ENCODE measurements at regions of chr3 and their contacts with region 1.

Region 1: GRCh38 chr3:25594007-25594502 is 70.7 kb downstream of the TOP2B start:
- DNase-seq: peak; percentile 43 to 52
- H3K4me3 ChIP-seq: no peak overlapping the region
- H3K27ac ChIP-seq: peak overlapping the region; percentile 7 to 39 (median 29)
- H3K4me1 ChIP-seq: peaks cover 47 to 49% of the 10 kb centered on the region in 2 donors
- H3K27me3 ChIP-seq: no peaks in the 10 kb centered on the region
- CTCF ChIP-seq: peak; percentile 83 to 99 (median 87)
- POLR2A ChIP-seq: no peak

Region 2: GRCh38 chr3:24773798-24774197 is 820.3 kb before region 1 on chr3:
- intact Hi-C with region 1: loop called (anchors 5 kb)
- DNase-seq: peak; percentile 57 to 62
- H3K4me3 ChIP-seq: no peak overlapping the region
- H3K27ac ChIP-seq: no peak overlapping the region
- H3K4me1 ChIP-seq: no peaks in the 10 kb centered on the region
- H3K27me3 ChIP-seq: no peaks in the 10 kb centered on the region
- CTCF ChIP-seq: peak in 5 of 6 experiments; percentile 34 to 91 (median 78)
- POLR2A ChIP-seq: no peak

Region 3: DNA sequence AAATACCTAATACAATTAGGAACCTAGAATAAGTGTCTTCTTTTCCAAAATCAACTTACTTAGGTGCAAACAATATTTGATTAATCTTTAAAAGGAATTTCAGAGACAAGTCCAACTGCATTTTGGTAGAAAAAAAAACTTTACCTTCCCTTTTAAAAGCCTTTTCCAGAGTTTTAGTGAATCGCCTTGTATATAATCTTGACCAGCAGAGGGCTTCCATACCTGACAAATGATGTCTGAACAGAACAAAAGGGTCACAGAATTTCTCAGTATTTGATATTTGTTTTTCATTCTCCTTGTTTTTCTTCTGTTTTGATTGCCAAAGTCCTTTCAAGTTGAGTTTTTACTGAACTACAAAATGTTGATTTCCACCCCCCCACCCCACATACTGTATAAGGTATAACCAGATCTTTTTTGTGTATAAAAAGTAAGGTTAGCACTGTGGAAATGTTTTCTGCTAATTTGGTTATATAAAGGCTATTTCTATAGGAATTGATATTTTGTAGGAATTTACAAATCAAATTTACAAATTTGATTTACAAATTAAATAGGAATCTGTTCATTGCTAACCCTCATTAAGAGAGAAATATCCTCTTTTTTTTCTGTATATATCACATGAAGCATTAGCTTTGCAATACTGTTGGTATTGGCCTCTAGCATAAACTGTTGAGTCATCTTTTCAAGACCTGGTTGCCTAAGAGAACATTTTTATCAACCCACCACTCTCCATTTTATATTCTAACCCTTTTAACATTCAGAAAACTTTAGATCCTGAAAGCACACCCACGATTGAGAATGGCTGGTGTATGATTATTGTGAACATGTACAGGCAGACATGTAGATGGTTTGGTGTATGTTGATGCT is 630.1 kb before region 1 on chr3:
- intact Hi-C with region 1: loop called (anchors 10 kb)
- DNase-seq: no peak
- H3K4me3 ChIP-seq: no peak overlapping the region
- H3K27ac ChIP-seq: no peak overlapping the region
- H3K4me1 ChIP-seq: peaks cover 0 to 3% of the 10 kb centered on the region in 2 donors
- H3K27me3 ChIP-seq: no peaks in the 10 kb centered on the region
- CTCF ChIP-seq: peak; percentile 18 to 79 (median 59)
- POLR2A ChIP-seq: no peak

Region 4: DNA sequence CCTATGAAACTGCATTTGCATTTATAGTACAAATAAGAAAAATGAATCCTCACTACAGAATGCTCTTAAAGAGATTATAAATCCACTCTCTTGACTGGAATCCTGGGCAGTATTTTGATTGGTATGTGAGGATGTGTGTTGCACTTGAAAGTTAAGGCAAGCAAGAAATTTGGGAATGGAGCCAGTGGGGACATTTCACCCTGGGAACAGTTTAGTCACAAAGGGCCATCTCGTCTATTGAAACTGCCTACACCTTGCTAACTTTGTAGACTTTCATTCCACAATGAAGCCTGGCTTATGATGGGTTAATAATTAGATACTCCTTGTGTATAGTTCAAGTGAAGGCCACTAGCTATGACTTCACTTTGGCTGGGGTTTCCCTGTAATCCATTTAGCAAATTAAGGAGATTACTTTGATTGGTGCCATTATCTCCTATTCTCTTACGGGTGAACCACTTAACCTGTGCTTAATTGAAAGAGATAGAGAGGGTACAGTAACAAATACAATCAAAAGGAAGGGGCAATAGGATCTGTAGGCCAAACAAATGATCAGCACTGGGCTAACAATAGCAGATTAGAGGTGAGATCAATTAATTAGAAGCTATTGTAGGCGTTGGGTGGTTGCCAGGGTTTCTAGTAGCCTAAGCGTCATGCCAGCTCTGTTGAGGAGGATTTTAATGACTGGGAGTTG is 312.9 kb before region 1 on chr3:
- intact Hi-C with region 1: loop called (anchors 10 kb)
- DNase-seq: peak; percentile 76 to 78
- H3K4me3 ChIP-seq: no peak overlapping the region
- H3K27ac ChIP-seq: peak overlapping the region in 2 of 3 donors; percentile 17 to 21
- H3K4me1 ChIP-seq: peaks cover 4 to 11% of the 10 kb centered on the region in 2 donors
- H3K27me3 ChIP-seq: no peaks in the 10 kb centered on the region
- CTCF ChIP-seq: no peak
- POLR2A ChIP-seq: no peak

Region 5: DNA sequence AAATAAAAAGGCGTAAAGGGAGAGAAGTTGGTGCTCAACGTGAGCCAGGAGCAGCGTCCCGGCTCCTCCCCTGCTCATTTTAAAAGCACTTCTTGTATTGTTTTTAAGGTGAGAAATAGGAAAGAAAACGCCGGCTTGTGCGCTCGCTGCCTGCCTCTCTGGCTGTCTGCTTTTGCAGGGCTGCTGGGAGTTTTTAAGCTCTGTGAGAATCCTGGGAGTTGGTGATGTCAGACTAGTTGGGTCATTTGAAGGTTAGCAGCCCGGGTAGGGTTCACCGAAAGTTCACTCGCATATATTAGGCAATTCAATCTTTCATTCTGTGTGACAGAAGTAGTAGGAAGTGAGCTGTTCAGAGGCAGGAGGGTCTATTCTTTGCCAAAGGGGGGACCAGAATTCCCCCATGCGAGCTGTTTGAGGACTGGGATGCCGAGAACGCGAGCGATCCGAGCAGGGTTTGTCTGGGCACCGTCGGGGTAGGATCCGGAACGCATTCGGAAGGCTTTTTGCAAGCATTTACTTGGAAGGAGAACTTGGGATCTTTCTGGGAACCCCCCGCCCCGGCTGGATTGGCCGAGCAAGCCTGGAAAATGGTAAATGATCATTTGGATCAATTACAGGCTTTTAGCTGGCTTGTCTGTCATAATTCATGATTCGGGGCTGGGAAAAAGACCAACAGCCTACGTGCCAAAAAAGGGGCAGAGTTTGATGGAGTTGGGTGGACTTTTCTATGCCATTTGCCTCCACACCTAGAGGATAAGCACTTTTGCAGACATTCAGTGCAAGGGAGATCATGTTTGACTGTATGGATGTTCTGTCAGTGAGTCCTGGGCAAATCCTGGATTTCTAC is 165.9 kb before region 1 on chr3 and contains the start of gene RARB:
- intact Hi-C with region 1: loop called (anchors 10 kb)
- DNase-seq: peak; percentile 84 to 88
- H3K4me3 ChIP-seq: peak within 1 kb of the TSS; percentile 23 to 81 (median 43)
- H3K27ac ChIP-seq: peak within 1 kb of the TSS; percentile 90 to 97 (median 97)
- H3K4me1 ChIP-seq: peaks cover 28 to 45% of the 10 kb centered on the region in 2 donors
- H3K27me3 ChIP-seq: no peaks in the 10 kb centered on the region
- CTCF ChIP-seq: no peak
- POLR2A ChIP-seq: peak; percentile 75 to 90
- total RNA-seq, gene RARB: 13.6 to 31.5 (median 20.5) TPM

Measured in thyroid gland (tissue), 4 donors.